ENCODE measurements at regions of chr18 and their contacts with region 1.

Region 1: DNA sequence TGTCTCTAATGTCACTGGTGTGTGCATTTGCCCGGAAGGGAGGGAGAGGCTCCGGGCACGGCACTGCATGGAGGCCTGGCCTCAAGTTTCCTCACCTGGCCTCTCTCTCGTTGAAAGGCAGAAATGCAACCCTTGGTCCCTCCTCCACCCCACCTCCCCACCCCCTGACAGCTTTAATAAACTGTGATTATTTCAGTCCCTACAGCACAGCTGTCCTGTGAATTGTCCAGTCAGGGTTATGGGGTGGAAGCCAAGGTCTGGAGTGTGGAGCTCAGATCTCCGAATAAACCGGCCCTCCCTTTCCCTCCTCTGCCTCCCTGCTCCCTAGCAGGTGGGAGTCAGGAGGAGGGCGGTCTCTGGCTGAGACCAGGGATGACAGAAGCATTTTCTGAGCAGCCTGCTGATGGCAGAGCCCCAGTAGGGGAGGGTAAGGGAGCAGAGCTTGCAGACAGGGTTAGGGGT is 199.2 kb upstream of the SMAD2 start:
- DNase-seq: no peak
- H3K4me3 ChIP-seq: no peak overlapping the region
- H3K27ac ChIP-seq: peak overlapping the region; percentile 45 to 52
- H3K4me1 ChIP-seq: peaks cover under 1 to 21% of the 10 kb centered on the region in 2 donors
- H3K27me3 ChIP-seq: no peaks in the 10 kb centered on the region
- CTCF ChIP-seq: no peak
- POLR2A ChIP-seq: no peak

Region 2: DNA sequence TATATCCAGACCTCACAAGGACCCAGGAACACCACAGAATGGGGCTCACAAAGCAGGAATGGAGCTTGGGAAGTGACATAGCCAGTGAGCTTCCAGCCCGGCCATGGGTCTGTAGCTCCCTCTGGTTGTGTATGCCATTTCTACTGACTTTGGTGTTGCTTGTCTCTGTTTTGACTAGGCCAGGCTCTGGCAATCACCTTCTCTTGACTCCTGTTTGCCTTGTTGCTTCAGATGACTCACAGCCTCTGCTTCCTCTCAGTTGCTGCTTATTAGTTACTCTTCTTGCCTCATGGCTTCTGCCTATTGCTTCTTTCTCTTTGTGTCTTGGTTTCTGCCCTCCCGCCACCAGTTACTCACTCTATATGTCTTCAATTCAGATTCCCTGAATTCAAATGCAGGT is 937.7 kb before region 1 on chr18:
- intact Hi-C with region 1: loop called (anchors 5 kb)
- DNase-seq: no peak
- H3K4me3 ChIP-seq: no peak overlapping the region
- H3K27ac ChIP-seq: no peak overlapping the region
- H3K4me1 ChIP-seq: no peaks in the 10 kb centered on the region
- H3K27me3 ChIP-seq: peaks cover 0 to 3% of the 10 kb centered on the region in 2 donors
- CTCF ChIP-seq: no peak
- POLR2A ChIP-seq: no peak

Region 3: GRCh38 chr18:47263430-47264307 is 866.0 kb before region 1 on chr18:
- intact Hi-C with region 1: no loop called
- DNase-seq: no peak
- H3K4me3 ChIP-seq: peak overlapping the region in 2 of 3 donors; percentile 10 to 55
- H3K27ac ChIP-seq: no peak overlapping the region
- H3K4me1 ChIP-seq: no peaks in the 10 kb centered on the region
- H3K27me3 ChIP-seq: peaks cover 7 to 72% of the 10 kb centered on the region in 2 donors
- CTCF ChIP-seq: no peak
- POLR2A ChIP-seq: no peak